ENCODE measurements at regions of chr17 and their contacts with region 1.

Region 1: GRCh38 chr17:59901604-59902003 is 8.7 kb downstream of the RPS6KB1 start:
- DNase-seq: no peak
- CTCF ChIP-seq: no peak

Region 2: GRCh38 chr17:59707971-59708509 is 193.6 kb before region 1 on chr17:
- in situ Hi-C with region 1: no loop called
- DNase-seq: no peak
- CTCF ChIP-seq: no peak

Region 3: GRCh38 chr17:59786536-59787319 is 114.9 kb before region 1 on chr17:
- in situ Hi-C with region 1: no loop called
- DNase-seq: peak; percentile 70
- CTCF ChIP-seq: no peak

Region 4: DNA sequence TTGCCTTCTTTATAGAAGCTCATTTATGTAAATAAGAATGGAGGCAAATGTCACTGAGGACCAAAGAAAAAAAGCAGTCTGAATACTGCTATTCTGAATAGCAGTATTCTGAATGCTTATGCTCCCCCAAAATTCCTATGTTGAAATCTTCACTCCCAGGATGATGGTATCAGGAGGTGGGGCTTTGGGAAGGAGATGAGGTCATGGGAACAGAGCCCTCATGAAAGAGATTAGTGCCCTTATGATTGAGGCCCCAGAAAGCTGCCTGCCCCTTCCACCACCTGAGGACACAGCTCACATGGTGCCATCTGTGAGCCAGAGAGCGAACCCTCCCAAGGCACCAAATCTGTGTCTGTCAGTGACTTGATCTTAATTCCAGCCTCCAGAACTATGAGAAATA is 148.3 kb after region 1 on chr17:
- in situ Hi-C with region 1: loop called (anchors 10 kb)
- DNase-seq: no peak
- CTCF ChIP-seq: no peak